PC-3 (cell line): ENCODE measurements at regions of chr3 and their contacts with region 1.

Region 1: GRCh38 chr3:106247902-106248684 is 379.3 kb upstream of the CBLB start:
- DNase-seq: no peak
- ATAC-seq: no peak
- H3K4me3 ChIP-seq: no peak overlapping the region
- H3K27ac ChIP-seq: no peak overlapping the region
- H3K4me1 ChIP-seq: peaks cover 10% of the 10 kb centered on the region
- H3K27me3 ChIP-seq: no peaks in the 10 kb centered on the region
- CTCF ChIP-seq: no peak

Region 2: GRCh38 chr3:106049821-106050220 is 198.3 kb before region 1 on chr3:
- CTCF ChIA-PET with region 1: no interaction called
- POLR2A ChIA-PET with region 1: no interaction called
- intact Hi-C with region 1: no loop called
- DNase-seq: no peak
- ATAC-seq: no peak
- H3K4me3 ChIP-seq: no peak overlapping the region
- H3K27ac ChIP-seq: no peak overlapping the region
- H3K4me1 ChIP-seq: peaks cover 8% of the 10 kb centered on the region
- H3K27me3 ChIP-seq: no peaks in the 10 kb centered on the region
- CTCF ChIP-seq: no peak

Region 3: DNA sequence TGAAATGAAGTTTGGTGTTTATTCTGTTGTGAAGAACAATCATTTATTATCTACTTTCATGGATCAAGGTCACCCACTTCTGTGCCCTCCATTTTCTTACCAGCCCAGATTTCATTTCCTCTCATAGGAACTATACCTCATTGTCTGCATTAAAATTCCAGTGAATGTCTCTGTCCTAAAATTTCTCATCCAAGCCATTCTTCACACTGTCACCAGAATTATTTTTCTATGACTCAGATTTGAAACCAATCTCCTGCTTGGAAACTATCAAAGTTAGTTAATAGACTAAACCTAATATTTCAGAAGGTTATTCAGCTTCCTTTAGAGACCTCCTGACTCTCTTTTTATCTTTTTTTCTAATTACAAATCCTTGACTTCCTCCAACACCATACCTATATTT is 15.1 kb before region 1 on chr3:
- CTCF ChIA-PET with region 1: no interaction called
- POLR2A ChIA-PET with region 1: no interaction called
- intact Hi-C with region 1: loop called (anchors 1 kb)
- DNase-seq: no peak
- ATAC-seq: no peak
- H3K4me3 ChIP-seq: no peak overlapping the region
- H3K27ac ChIP-seq: no peak overlapping the region
- H3K4me1 ChIP-seq: no peaks in the 10 kb centered on the region
- H3K27me3 ChIP-seq: no peaks in the 10 kb centered on the region
- CTCF ChIP-seq: no peak

Region 4: GRCh38 chr3:106457286-106458180 is 209.4 kb after region 1 on chr3:
- CTCF ChIA-PET with region 1: no interaction called
- POLR2A ChIA-PET with region 1: no interaction called
- intact Hi-C with region 1: no loop called
- DNase-seq: peak; percentile 96
- ATAC-seq: peak; percentile 100
- H3K4me3 ChIP-seq: no peak overlapping the region
- H3K27ac ChIP-seq: no peak overlapping the region
- H3K4me1 ChIP-seq: peaks cover 8% of the 10 kb centered on the region; the same call in 1 of the 2 replicates
- H3K27me3 ChIP-seq: no peaks in the 10 kb centered on the region
- CTCF ChIP-seq: no peak

Region 5: GRCh38 chr3:106566277-106566676 is 318.2 kb after region 1 on chr3:
- CTCF ChIA-PET with region 1: no interaction called
- POLR2A ChIA-PET with region 1: no interaction called
- intact Hi-C with region 1: no loop called
- DNase-seq: no peak
- ATAC-seq: no peak
- H3K4me3 ChIP-seq: no peak overlapping the region
- H3K27ac ChIP-seq: no peak overlapping the region
- H3K4me1 ChIP-seq: peaks cover under 1% of the 10 kb centered on the region
- H3K27me3 ChIP-seq: no peaks in the 10 kb centered on the region
- CTCF ChIP-seq: no peak; the same call in 1 of the 2 replicates